Activated B cell treated with CpG ODN at 0.5 μM for 24 hours (primary cell): ENCODE measurements at regions of chr2 and their contacts with region 1.

Region 1: DNA sequence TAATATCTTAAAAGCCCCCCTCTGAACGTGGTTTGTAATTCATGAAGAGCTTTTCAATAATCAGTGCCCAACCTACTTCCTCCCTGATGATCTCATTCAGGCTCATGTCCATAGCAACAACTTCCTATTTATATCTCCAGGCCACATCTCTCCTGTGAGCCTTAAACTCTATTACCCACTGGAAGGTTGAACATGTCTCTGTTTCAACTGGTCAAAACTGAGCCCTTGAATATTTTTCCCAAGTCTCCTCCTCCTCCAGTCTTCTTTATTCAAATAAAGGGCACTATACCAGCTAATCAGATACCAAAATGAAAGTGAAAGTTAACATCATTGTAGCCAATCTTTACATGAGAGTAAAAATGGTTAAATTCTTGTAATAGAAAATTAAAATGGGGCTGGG is 63.7 kb upstream of the ITGA4 start:
- DNase-seq: no peak
- ATAC-seq: peak; percentile 79
- H3K4me3 Mint-ChIP-seq: peak overlapping the region; percentile 72
- H3K27ac Mint-ChIP-seq: peak overlapping the region; percentile 91
- H3K4me1 Mint-ChIP-seq: peaks cover 30% of the 10 kb centered on the region
- H3K27me3 Mint-ChIP-seq: no peaks in the 10 kb centered on the region
- CTCF ChIP-seq: no peak

Region 2: DNA sequence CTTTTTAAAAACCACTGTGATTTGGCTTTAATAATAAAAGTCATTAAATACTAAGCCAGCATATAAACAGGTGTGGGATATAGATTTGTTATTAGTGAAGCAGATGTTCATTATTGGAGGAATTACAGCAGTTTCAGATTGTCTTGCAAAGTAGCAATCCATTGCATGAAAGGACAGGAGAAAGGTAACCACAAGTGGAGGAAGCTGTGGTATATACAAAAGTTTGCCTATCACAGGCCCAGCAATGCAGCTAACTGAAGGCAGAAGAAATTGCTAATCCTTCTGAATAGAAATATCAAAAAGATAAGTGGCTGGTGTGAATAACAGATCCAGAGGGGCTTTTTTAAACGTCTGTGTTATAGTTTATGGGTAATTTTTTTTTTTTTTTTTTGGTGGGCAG is 1731.5 kb before region 1 on chr2:
- CTCF ChIA-PET with region 1: no interaction called
- POLR2A ChIA-PET with region 1: no interaction called
- intact Hi-C with region 1: no loop called
- DNase-seq: no peak
- ATAC-seq: no peak
- H3K4me3 Mint-ChIP-seq: no peak overlapping the region
- H3K27ac Mint-ChIP-seq: no peak overlapping the region
- H3K4me1 Mint-ChIP-seq: no peaks in the 10 kb centered on the region
- H3K27me3 Mint-ChIP-seq: no peaks in the 10 kb centered on the region
- CTCF ChIP-seq: no peak

Region 3: DNA sequence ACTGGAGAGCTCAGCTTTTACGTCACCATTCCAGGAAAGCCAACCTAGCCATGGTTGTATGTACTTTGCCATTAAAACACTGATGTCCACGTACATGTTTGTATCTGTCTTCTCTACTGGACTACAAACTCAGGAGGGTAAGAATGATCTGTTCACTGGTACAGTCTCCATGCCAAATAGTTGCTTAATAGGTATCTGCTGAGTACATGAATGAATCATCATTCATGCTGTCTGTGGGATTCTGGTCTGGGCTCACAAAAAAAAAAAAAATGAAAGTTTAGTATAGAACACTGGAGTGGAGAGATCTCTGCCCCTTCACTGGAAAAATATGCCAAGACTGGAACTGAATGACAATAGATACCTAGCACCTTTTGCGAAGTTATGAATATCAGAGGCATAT is 38.8 kb before region 1 on chr2:
- CTCF ChIA-PET with region 1: no interaction called
- POLR2A ChIA-PET with region 1: no interaction called
- intact Hi-C with region 1: loop called (anchors 5 kb)
- DNase-seq: no peak
- ATAC-seq: no peak
- H3K4me3 Mint-ChIP-seq: no peak overlapping the region
- H3K27ac Mint-ChIP-seq: no peak overlapping the region
- H3K4me1 Mint-ChIP-seq: peaks cover 29% of the 10 kb centered on the region
- H3K27me3 Mint-ChIP-seq: no peaks in the 10 kb centered on the region
- CTCF ChIP-seq: no peak

Region 4: GRCh38 chr2:181374781-181375675 is 18.4 kb before region 1 on chr2:
- CTCF ChIA-PET with region 1: no interaction called
- POLR2A ChIA-PET with region 1: interaction called, 5 read pairs
- intact Hi-C with region 1: loop called (anchors 2 kb)
- DNase-seq: no peak
- ATAC-seq: peak; percentile 72
- H3K4me3 Mint-ChIP-seq: no peak overlapping the region
- H3K27ac Mint-ChIP-seq: no peak overlapping the region
- H3K4me1 Mint-ChIP-seq: peaks cover 49% of the 10 kb centered on the region
- H3K27me3 Mint-ChIP-seq: no peaks in the 10 kb centered on the region
- CTCF ChIP-seq: no peak

Region 5: GRCh38 chr2:181411105-181411849 is 17.8 kb after region 1 on chr2:
- CTCF ChIA-PET with region 1: interaction called, 4 read pairs
- POLR2A ChIA-PET with region 1: interaction called, 6 read pairs
- intact Hi-C with region 1: loop called (anchors 1 kb)
- DNase-seq: peak; percentile 54
- ATAC-seq: peak; percentile 98
- H3K4me3 Mint-ChIP-seq: peak overlapping the region; percentile 52
- H3K27ac Mint-ChIP-seq: peak overlapping the region; percentile 86
- H3K4me1 Mint-ChIP-seq: peaks cover 88% of the 10 kb centered on the region
- H3K27me3 Mint-ChIP-seq: no peaks in the 10 kb centered on the region
- CTCF ChIP-seq: no peak

Region 6: GRCh38 chr2:181430406-181431118 is 37.1 kb after region 1 on chr2:
- CTCF ChIA-PET with region 1: no interaction called
- POLR2A ChIA-PET with region 1: interaction called, 3 read pairs
- intact Hi-C with region 1: loop called (anchors 2 kb)
- DNase-seq: no peak
- ATAC-seq: peak; percentile 92
- H3K4me3 Mint-ChIP-seq: no peak overlapping the region
- H3K27ac Mint-ChIP-seq: peak overlapping the region; percentile 82
- H3K4me1 Mint-ChIP-seq: peaks cover 17% of the 10 kb centered on the region
- H3K27me3 Mint-ChIP-seq: no peaks in the 10 kb centered on the region
- CTCF ChIP-seq: no peak